SK-N-SH (cell line): ENCODE measurements at regions of chr7 and their contacts with region 1.

Region 1: DNA sequence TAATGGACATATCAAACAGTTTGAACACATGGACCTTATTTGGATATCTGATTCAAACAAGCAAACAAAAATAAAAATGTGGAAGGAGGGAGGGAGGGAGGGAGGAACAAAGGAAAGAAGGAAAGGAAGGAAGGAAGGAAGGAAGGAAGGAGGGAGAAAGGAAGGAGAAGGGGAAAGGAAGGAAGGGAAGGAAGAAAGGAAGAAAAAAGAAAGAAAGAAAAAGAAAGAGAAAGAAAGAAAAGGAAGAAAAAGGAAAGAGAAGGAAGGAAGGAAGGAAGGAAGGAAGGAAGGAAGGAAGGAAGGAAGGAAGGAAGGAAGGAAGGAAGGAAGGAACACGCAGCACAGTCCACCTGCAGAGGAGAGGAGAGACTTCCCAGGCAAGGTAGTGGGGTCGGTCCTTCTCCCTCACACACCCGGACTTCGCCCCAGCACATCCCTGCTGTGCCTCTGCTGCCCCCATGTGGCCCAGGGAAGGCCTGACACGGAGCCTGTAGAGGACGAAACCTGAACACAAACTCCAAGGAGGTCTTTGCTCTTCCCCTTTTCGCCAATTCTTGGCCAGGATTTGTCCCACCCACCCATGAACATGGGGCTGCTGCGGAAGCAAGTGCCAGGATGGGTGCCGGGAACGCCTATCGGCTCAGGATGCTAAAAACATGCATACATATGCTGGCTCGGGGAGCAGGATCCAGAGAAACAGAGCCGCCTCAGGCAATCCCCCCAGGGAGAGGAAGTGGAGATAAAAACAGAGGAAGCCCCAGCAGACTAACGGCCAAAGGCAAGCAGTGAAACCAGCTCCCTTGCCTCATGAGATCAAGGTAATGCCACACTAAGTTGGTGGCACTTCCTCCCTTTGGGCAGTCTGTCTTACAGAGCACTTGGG is 52.3 kb upstream of the DGKI start:
- DNase-seq: peak; percentile 89
- H3K4me3 ChIP-seq: no peak overlapping the region; a peak in 1 of 4 replicates
- H3K27ac ChIP-seq: peak overlapping the region; percentile 17 to 36; a peak in 3 of 4 replicates
- H3K4me1 ChIP-seq: peaks cover 0 to 8% of the 10 kb centered on the region in 2 experiments; a peak in 1 of 4 replicates
- H3K27me3 ChIP-seq: no peaks in the 10 kb centered on the region
- CTCF ChIP-seq: peak; percentile 99
- EP300 ChIP-seq: no peak
- RAD21 ChIP-seq: peak; percentile 98

Region 2: GRCh38 chr7:137091396-137091795 is 807.7 kb before region 1 on chr7:
- CTCF ChIA-PET with region 1: no interaction called
- POLR2A ChIA-PET with region 1: no interaction called
- DNase-seq: peak; percentile 56
- H3K4me3 ChIP-seq: no peak overlapping the region
- H3K27ac ChIP-seq: no peak overlapping the region
- H3K4me1 ChIP-seq: no peaks in the 10 kb centered on the region
- H3K27me3 ChIP-seq: no peaks in the 10 kb centered on the region
- CTCF ChIP-seq: peak; percentile 37; the same call in 1 of the 2 replicates
- EP300 ChIP-seq: no peak
- RAD21 ChIP-seq: peak; percentile 76

Region 3: DNA sequence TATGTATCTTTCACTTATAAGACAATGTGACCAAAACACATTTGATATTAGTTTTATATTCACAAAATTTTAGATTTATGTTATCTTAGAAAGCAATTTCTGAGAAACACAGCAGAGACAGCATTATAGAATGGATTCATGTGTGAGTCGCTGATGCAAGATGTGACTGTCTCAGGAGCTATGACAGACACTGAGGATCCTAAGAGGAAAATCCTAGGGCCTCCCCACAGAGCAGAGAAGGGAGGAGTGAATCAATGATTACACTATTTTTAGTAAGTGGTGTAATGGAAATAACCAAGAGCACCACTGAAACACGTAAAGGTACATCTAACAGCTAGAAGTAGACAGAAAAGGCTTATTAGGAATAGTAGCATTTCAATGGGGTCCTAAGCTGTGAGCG is 351.6 kb before region 1 on chr7:
- CTCF ChIA-PET with region 1: no interaction called
- POLR2A ChIA-PET with region 1: no interaction called
- DNase-seq: no peak
- H3K4me3 ChIP-seq: no peak overlapping the region
- H3K27ac ChIP-seq: no peak overlapping the region
- H3K4me1 ChIP-seq: peaks cover 0 to 6% of the 10 kb centered on the region in 2 experiments; a peak in 2 of 4 replicates
- H3K27me3 ChIP-seq: no peaks in the 10 kb centered on the region
- CTCF ChIP-seq: no peak
- EP300 ChIP-seq: no peak
- RAD21 ChIP-seq: no peak

Region 4: GRCh38 chr7:137606061-137606674 is 292.9 kb before region 1 on chr7:
- CTCF ChIA-PET with region 1: interaction called, 76 read pairs
- POLR2A ChIA-PET with region 1: no interaction called
- DNase-seq: no peak
- H3K4me3 ChIP-seq: no peak overlapping the region; a peak in 1 of 4 replicates
- H3K27ac ChIP-seq: no peak overlapping the region
- H3K4me1 ChIP-seq: no peaks in the 10 kb centered on the region; a peak in 1 of 4 replicates
- H3K27me3 ChIP-seq: no peaks in the 10 kb centered on the region
- CTCF ChIP-seq: peak; percentile 91
- EP300 ChIP-seq: no peak
- RAD21 ChIP-seq: peak; percentile 64

Region 5: DNA sequence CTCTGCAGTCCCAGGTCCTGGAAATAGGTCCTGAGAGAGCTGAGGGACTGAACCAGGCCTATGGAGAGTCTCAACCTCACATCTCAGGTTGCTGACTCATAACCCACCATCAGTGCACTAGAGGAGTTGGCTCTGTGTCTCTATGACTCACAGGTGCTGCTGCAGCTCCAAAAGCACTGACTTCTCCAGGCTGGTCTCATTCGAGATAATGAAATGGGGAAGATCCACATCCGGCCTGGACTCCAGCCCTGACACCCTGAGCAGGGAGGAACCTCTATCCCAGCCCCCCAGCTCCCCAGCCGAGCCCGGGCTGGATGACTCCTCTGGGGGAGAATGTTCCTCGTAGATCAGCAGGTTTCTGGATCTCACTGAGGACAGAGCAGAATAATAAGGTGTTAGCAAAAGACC is 16.8 kb before region 1 on chr7:
- CTCF ChIA-PET with region 1: interaction called, 12 read pairs
- POLR2A ChIA-PET with region 1: no interaction called
- DNase-seq: peak; percentile 36
- H3K4me3 ChIP-seq: peak overlapping the region in 1 of 2 experiments; percentile 7; a peak in 1 of 4 replicates
- H3K27ac ChIP-seq: peak overlapping the region; percentile 65 to 96; a peak in 3 of 4 replicates
- H3K4me1 ChIP-seq: peaks cover 3 to 39% of the 10 kb centered on the region in 2 experiments; a peak in 3 of 4 replicates
- H3K27me3 ChIP-seq: no peaks in the 10 kb centered on the region
- CTCF ChIP-seq: no peak
- EP300 ChIP-seq: peak in 1 of 2 experiments; percentile 95; a peak in 2 of 4 replicates
- RAD21 ChIP-seq: no peak

Region 6: GRCh38 chr7:137920637-137921399 is 21.7 kb after region 1 on chr7:
- CTCF ChIA-PET with region 1: interaction called, 21 read pairs
- POLR2A ChIA-PET with region 1: no interaction called
- DNase-seq: no peak
- H3K4me3 ChIP-seq: no peak overlapping the region
- H3K27ac ChIP-seq: no peak overlapping the region
- H3K4me1 ChIP-seq: peaks cover 9 to 15% of the 10 kb centered on the region in 2 experiments; a peak in 3 of 4 replicates
- H3K27me3 ChIP-seq: no peaks in the 10 kb centered on the region
- CTCF ChIP-seq: no peak
- EP300 ChIP-seq: no peak
- RAD21 ChIP-seq: no peak

Region 7: GRCh38 chr7:137985253-137985896 is 86.3 kb after region 1 on chr7:
- CTCF ChIA-PET with region 1: interaction called, 642 read pairs
- POLR2A ChIA-PET with region 1: no interaction called
- DNase-seq: no peak
- H3K4me3 ChIP-seq: no peak overlapping the region
- H3K27ac ChIP-seq: no peak overlapping the region
- H3K4me1 ChIP-seq: peaks cover 44 to 46% of the 10 kb centered on the region in 2 experiments
- H3K27me3 ChIP-seq: no peaks in the 10 kb centered on the region
- CTCF ChIP-seq: no peak
- EP300 ChIP-seq: no peak
- RAD21 ChIP-seq: no peak

Region 8: GRCh38 chr7:138008547-138009349 is 109.7 kb after region 1 on chr7:
- CTCF ChIA-PET with region 1: interaction called, 642 read pairs
- POLR2A ChIA-PET with region 1: interaction called, 5 read pairs
- DNase-seq: peak; percentile 63
- H3K4me3 ChIP-seq: no peak overlapping the region; a peak in 1 of 4 replicates
- H3K27ac ChIP-seq: no peak overlapping the region
- H3K4me1 ChIP-seq: no peaks in the 10 kb centered on the region; a peak in 1 of 4 replicates
- H3K27me3 ChIP-seq: no peaks in the 10 kb centered on the region
- CTCF ChIP-seq: peak; percentile 99
- EP300 ChIP-seq: no peak
- RAD21 ChIP-seq: peak; percentile 98

Region 9: GRCh38 chr7:138032186-138032585 is 133.1 kb after region 1 on chr7:
- CTCF ChIA-PET with region 1: interaction called, 10 read pairs
- POLR2A ChIA-PET with region 1: no interaction called
- DNase-seq: no peak
- H3K4me3 ChIP-seq: no peak overlapping the region
- H3K27ac ChIP-seq: no peak overlapping the region
- H3K4me1 ChIP-seq: no peaks in the 10 kb centered on the region
- H3K27me3 ChIP-seq: no peaks in the 10 kb centered on the region; the same call in 1 of the 2 replicates
- CTCF ChIP-seq: no peak
- EP300 ChIP-seq: no peak
- RAD21 ChIP-seq: no peak